KBM-7 (cell line): ENCODE measurements at regions of chr10 and their contacts with region 1.

Region 1: DNA sequence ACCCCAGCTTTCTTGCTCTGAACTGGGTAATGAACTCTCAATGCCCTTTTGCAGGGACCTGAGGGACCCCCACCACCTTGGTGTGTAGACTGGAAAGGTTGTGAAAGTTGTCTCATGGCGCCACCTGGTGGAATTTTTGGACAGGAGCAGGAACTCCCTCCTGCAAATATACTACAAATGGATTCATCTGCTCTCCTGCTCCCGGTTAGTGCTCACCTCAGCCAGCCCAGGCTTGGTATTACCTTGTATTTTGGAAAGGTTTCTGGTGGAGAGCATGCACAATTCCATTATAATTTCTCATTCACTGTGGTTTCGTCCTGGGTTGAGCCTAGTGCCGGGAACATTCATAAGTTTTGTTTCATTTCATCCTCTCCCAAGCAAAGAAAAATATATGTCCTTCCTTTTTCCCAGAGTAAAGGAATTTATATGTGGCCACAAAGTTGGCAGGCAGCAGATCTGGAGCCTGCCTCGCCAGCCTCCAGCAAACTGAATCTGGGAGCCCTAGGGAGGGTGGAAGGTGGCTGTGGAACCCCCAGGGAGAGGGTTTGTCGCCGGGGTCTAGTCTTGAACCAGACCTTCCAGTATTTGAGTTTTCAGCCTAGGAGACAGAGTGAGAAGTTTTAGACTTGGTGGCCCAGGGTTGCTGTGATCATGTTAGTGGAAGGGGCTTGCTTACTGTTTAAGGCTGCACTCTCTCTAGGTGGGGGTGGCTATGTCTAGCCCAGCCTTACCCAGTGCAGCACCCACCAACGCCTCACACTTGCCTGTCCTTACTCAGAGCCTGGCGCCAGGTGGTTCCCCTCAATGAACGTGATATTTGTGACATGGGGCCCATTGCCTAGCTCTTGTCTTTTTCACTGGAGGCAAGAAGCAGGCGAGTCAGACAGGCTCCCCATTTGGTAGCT is 9.5 kb downstream of the FAM241B start:
- DNase-seq: peak; percentile 82

Region 2: GRCh38 chr10:68106656-68107055 is 1532.9 kb before region 1 on chr10:
- in situ Hi-C with region 1: no loop called
- DNase-seq: no peak

Region 3: GRCh38 chr10:69295027-69295636 is 344.4 kb before region 1 on chr10:
- in situ Hi-C with region 1: no loop called
- DNase-seq: no peak

Region 4: DNA sequence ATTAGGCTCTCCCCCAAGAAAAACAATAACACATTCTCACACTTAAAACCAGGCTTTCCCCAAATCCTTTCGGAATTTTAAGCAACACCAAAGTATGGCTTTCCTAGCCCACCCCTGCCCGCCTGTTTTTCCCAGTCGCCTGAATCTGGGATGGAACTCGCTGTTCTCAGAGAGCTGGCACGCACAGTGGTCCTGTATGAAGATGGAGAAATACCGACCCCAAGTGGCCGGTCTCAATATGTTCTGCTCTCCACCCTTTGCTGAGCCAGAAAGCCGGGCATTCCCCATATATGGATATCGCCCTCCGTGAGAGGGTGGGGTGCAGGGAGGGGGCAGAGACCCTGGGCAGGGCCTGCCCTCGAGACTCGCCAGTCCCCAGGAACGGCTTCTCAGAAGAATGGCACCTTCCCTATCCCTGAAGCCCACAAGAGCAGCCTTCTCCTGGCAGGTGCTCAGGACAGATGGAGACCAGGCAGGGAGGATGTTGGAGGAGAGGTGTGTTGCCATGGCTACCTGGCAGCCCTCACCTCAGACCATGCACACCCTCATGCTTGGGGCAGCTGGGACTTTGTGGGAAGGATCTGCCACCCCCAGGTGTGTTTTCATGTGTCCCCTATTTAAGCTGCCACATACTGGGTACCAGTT is 226.2 kb before region 1 on chr10:
- in situ Hi-C with region 1: loop called (anchors 10 kb)
- DNase-seq: peak; percentile 51